Aorta (tissue), 5 donors: ENCODE measurements at regions of chr14 and their contacts with region 1.

Region 1: GRCh38 chr14:36661756-36662498 is at the start of gene PAX9:
- DNase-seq: peak; percentile 76 to 92
- ATAC-seq: peak; percentile 81
- H3K4me3 ChIP-seq: peak within 1 kb of the TSS; percentile 18 to 27
- H3K27ac ChIP-seq: no peak within 1 kb of the TSS
- H3K4me1 ChIP-seq: no peaks in the 10 kb centered on the region
- H3K27me3 ChIP-seq: peaks cover 0 to 3% of the 10 kb centered on the region in 2 donors
- total RNA-seq, gene PAX9: 0.48 to 3.4 TPM

Region 2: GRCh38 chr14:36626151-36626550 is 35.8 kb before region 1 on chr14:
- intact Hi-C with region 1: no loop called
- DNase-seq: no peak
- ATAC-seq: no peak
- H3K4me3 ChIP-seq: no peak overlapping the region
- H3K27ac ChIP-seq: no peak overlapping the region
- H3K4me1 ChIP-seq: no peaks in the 10 kb centered on the region
- H3K27me3 ChIP-seq: peaks cover 0 to 3% of the 10 kb centered on the region in 2 donors

Region 3: GRCh38 chr14:37197421-37198272 is 535.7 kb after region 1 on chr14 and contains the start of gene MIPOL1:
- intact Hi-C with region 1: loop called in 1 of 2 experiments (anchors 5 kb)
- DNase-seq: peak; percentile 89 to 95
- ATAC-seq: peak; percentile 99
- H3K4me3 ChIP-seq: peak within 1 kb of the TSS; percentile 68 to 94
- H3K27ac ChIP-seq: peak within 1 kb of the TSS; percentile 38 to 98
- H3K4me1 ChIP-seq: no peaks in the 10 kb centered on the region
- H3K27me3 ChIP-seq: no peaks in the 10 kb centered on the region
- total RNA-seq, gene MIPOL1: 19.7 to 20.6 TPM

Region 4: DNA sequence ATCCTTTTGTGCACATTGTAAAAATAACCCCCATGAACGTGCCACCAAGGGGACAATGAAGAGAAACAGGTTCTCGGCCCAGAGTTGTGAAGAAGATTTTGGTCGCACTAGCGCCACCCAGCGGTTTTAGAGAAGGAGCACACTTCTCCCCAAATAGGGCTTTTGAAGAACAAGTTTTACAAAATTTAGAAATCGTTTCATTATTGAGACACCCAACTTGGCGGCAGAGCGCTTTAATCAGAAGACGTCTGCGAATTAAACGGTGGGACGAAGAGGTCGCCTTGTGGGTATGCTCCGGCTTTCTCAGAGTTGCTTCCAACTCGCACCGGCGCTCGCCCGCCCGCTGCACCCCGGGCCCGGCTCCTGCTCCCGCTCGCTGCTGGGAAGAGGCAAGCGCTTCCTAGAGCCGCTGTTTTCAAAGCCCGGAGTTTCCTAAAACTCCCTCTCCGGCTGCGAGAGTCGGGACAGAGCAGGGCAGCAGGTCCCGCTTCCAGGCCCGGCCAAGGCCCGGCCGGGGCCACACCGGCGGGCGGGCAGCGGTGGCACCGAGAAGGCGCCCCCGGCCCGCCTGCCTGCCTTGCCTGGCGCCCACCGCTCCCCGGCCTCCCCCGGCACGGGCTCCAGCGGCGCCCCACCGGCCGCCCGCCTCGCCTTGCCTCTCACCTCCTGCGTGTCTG is 932.4 kb after region 1 on chr14:
- intact Hi-C with region 1: loop called in 1 of 2 experiments (anchors 10 kb)
- DNase-seq: peak in 1 of 2 donors; percentile 72
- ATAC-seq: no peak
- H3K4me3 ChIP-seq: peak overlapping the region in 1 of 2 donors; percentile 3
- H3K27ac ChIP-seq: no peak overlapping the region
- H3K4me1 ChIP-seq: no peaks in the 10 kb centered on the region
- H3K27me3 ChIP-seq: peaks cover 0 to 3% of the 10 kb centered on the region in 2 donors